Vagina (tissue), 2 donors: ENCODE measurements at regions of chr2 and their contacts with region 1.

Region 1: GRCh38 chr2:153939124-153939796 is 67.5 kb downstream of the GALNT13 start:
- DNase-seq: no peak
- H3K4me3 ChIP-seq: no peak overlapping the region
- H3K27ac ChIP-seq: no peak overlapping the region
- H3K4me1 ChIP-seq: no peaks in the 10 kb centered on the region
- H3K27me3 ChIP-seq: no peaks in the 10 kb centered on the region
- CTCF ChIP-seq: no peak
- POLR2A ChIP-seq: no peak

Region 2: DNA sequence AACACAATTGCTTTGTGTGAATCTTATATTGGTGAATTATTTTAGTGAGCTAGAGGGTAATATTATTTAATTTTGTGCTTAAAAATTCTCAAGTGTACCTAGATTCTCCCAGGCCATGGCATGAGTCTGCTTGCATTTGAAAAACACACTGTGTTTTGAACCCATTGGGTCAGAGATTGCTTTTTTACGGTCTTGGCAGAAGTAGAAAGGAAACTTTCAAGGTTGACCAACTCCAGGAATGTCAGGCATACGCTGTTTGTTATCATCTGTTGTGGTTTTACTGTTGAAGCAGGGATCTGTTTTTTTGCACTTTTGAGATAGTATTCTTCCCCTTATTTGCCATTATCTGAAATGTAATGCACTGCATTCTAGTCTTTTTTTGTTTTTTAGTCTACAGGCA is 838.1 kb before region 1 on chr2:
- intact Hi-C with region 1: no loop called
- DNase-seq: no peak
- H3K4me3 ChIP-seq: no peak overlapping the region
- H3K27ac ChIP-seq: no peak overlapping the region
- H3K4me1 ChIP-seq: no peaks in the 10 kb centered on the region
- H3K27me3 ChIP-seq: no peaks in the 10 kb centered on the region
- CTCF ChIP-seq: no peak
- POLR2A ChIP-seq: no peak

Region 3: GRCh38 chr2:153641046-153641445 is 298.2 kb before region 1 on chr2:
- intact Hi-C with region 1: loop called (anchors 5 kb)
- DNase-seq: no peak
- H3K4me3 ChIP-seq: no peak overlapping the region
- H3K27ac ChIP-seq: no peak overlapping the region
- H3K4me1 ChIP-seq: no peaks in the 10 kb centered on the region
- H3K27me3 ChIP-seq: no peaks in the 10 kb centered on the region
- CTCF ChIP-seq: no peak
- POLR2A ChIP-seq: no peak